Kidney (tissue), 22 donors: ENCODE measurements at regions of chr5 and their contacts with region 1.

Region 1: DNA sequence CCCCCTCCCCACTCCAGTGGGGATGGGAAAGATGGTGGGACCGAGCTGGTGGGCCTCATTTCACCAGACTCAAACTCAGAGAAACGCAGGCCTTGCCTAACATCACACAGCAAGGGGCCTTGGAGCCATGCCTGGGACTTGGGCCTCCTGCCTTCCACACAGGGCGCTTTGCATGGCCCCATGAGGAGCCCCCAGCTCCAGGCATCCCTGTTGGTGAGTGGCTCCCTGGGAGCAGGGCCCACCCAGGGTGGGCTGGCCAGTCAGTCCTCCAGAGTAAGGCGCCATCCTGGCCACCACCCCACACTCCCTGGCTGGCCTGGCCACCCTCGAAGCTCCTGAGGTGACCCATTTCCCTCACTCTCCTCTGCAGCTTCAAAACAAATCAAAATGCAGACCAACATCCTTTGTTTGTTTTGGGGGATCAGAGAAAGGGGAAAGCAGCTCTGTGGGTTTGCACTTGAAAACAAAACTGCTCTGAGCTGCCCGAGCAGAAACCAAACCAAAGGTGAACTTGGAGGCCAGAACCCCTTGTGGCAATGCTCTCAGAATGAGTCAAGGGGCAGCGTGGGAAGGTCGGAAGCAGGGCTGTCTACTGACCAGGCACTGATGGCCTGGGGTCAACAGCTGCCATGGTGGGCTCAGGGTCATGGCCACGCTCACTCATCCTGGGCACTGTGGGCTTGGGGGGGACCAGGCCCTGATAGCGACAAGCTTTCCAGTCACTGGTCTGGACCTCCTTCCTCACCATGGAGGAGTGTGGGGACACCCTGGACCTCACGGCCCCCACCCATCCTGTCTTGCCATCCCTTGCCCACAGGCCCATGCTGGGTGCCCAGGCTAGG is 37.0 kb upstream of the VDAC1 start:
- DNase-seq: no peak
- H3K4me3 ChIP-seq: no peak overlapping the region
- H3K27ac ChIP-seq: no peak overlapping the region
- H3K4me1 ChIP-seq: no peaks in the 10 kb centered on the region
- H3K27me3 ChIP-seq: no peaks in the 10 kb centered on the region
- CTCF ChIP-seq: no peak

Region 2: GRCh38 chr5:133709209-133709725 is 332.5 kb before region 1 on chr5:
- intact Hi-C with region 1: no loop called
- DNase-seq: peak in 2 of 5 donors; percentile 1 to 7
- H3K4me3 ChIP-seq: no peak overlapping the region
- H3K27ac ChIP-seq: no peak overlapping the region
- H3K4me1 ChIP-seq: peaks cover 0 to 5% (median 2%) of the 10 kb centered on the region in 3 donors
- H3K27me3 ChIP-seq: no peaks in the 10 kb centered on the region
- CTCF ChIP-seq: no peak

Region 3: GRCh38 chr5:134140530-134141201 is 98.9 kb after region 1 on chr5:
- intact Hi-C with region 1: loop called (anchors 5 kb)
- DNase-seq: peak; percentile 65 to 79 (median 74)
- H3K4me3 ChIP-seq: no peak overlapping the region
- H3K27ac ChIP-seq: no peak overlapping the region
- H3K4me1 ChIP-seq: peaks cover 0 to 4% (median 0%) of the 10 kb centered on the region in 3 donors
- H3K27me3 ChIP-seq: no peaks in the 10 kb centered on the region
- CTCF ChIP-seq: peak; percentile 72